Breast epithelium (tissue), 4 donors: ENCODE measurements at regions of chr13 and their contacts with region 1.

Region 1: DNA sequence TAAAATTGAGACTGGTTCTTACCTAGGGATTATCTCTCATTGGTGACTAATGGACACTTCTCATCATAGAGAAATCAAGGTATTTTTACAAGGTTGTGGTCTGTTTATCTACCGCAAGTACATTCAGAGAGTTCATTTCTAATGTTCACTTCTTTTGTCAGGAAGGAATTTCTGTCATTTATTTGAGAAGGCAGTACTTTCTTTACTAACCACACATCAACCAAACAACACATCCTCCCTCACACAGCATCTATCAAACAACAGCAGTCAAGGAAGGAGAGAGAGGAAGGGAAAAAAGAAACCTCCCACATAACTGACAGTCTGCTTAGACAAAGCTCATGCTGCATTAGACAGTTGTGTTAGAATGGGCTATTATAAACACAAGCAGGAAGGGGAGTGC is 182.3 kb upstream of the KLF12 start:
- DNase-seq: no peak
- H3K4me3 ChIP-seq: no peak overlapping the region
- H3K27ac ChIP-seq: no peak overlapping the region
- H3K4me1 ChIP-seq: no peaks in the 10 kb centered on the region
- H3K27me3 ChIP-seq: no peaks in the 10 kb centered on the region
- CTCF ChIP-seq: no peak
- POLR2A ChIP-seq: no peak

Region 2: DNA sequence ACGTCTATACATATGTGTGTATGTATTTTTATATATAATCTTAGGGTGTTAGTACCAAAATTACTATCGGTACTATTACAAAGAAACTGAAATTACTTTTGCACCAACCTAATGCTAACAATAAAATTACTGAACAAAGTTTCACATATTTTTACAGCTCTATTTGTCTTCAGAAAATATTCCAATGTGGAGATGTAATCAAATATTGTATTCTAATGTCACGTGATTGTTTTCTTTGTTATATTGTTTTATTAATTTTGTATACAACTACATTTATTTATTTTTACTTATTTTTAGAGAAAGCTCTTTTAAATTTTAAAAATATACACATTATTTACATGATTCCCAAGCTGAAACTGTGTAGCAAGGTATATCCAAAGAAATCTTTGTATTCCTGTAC is 44.7 kb after region 1 on chr13:
- intact Hi-C with region 1: loop called (anchors 2 kb)
- DNase-seq: no peak
- H3K4me3 ChIP-seq: no peak overlapping the region
- H3K27ac ChIP-seq: no peak overlapping the region
- H3K4me1 ChIP-seq: no peaks in the 10 kb centered on the region
- H3K27me3 ChIP-seq: no peaks in the 10 kb centered on the region
- CTCF ChIP-seq: no peak
- POLR2A ChIP-seq: no peak

Region 3: GRCh38 chr13:75549262-75550158 is 1233.0 kb after region 1 on chr13 and contains the start of gene UCHL3:
- intact Hi-C with region 1: no loop called
- DNase-seq: peak; percentile 91 to 96
- H3K4me3 ChIP-seq: peak within 1 kb of the TSS; percentile 84 to 92 (median 91)
- H3K27ac ChIP-seq: peak within 1 kb of the TSS; percentile 88 to 91
- H3K4me1 ChIP-seq: peaks cover 0 to 10% of the 10 kb centered on the region in 2 donors
- H3K27me3 ChIP-seq: no peaks in the 10 kb centered on the region
- CTCF ChIP-seq: peak; percentile 84 to 95 (median 88)
- POLR2A ChIP-seq: no peak
- total RNA-seq, gene UCHL3: 29.2 to 33.2 (median 29.6) TPM